ENCODE measurements at regions of chr1 and their contacts with region 1.

Region 1: GRCh38 chr1:39091845-39092645 is 65.9 kb downstream of the NDUFS5 start:
- DNase-seq: peak; percentile 81
- ATAC-seq: peak; percentile 92
- H3K4me3 ChIP-seq: no peak overlapping the region
- H3K27ac ChIP-seq: no peak overlapping the region
- H3K4me1 ChIP-seq: peaks cover 4% of the 10 kb centered on the region
- H3K27me3 ChIP-seq: no peaks in the 10 kb centered on the region
- CTCF ChIP-seq: peak; percentile 80
- POLR2A ChIP-seq: no peak
- RAD21 ChIP-seq: peak; percentile 76

Region 2: DNA sequence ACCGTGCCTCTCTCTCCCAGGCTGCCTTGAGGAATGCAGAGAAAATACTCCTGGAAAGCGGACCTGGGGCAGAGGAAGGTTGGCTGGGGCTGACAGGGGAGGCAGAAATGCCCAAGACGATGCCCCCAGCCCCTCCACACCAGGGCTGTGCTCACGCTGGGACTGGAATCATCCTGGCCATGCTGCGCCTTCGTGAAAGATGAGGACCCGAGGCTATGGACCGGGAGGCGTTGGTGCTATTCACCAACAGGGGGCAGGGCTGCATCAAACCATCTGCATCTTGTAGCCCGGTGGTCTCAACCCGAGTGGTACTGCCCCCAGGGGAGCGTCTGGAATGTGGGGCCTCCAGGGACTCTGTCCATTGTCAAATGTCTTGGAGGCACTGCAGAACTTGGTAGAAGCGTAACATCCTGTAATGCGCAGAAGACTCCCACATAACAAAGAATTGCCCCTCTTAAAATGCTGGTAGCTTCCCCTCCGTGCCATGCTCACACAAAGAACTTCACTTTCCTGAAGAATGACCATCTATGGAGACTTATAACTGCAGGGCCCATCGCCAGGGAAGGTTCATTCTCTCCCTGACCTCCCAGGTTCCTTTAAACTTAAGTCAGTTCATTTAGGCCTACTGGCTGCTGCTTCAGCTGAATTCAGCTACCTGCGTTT is 483.7 kb before region 1 on chr1:
- CTCF ChIA-PET with region 1: no interaction called
- POLR2A ChIA-PET with region 1: no interaction called
- dilution Hi-C with region 1: no loop called
- in situ Hi-C with region 1: no loop called
- intact Hi-C with region 1: loop called (anchors 5 kb)
- DNase-seq: peak; percentile 4
- ATAC-seq: peak; percentile 57; the same call in 1 of the 2 replicates
- H3K4me3 ChIP-seq: no peak overlapping the region
- H3K27ac ChIP-seq: no peak overlapping the region
- H3K4me1 ChIP-seq: no peaks in the 10 kb centered on the region
- H3K27me3 ChIP-seq: no peaks in the 10 kb centered on the region; the same call in 1 of the 2 replicates
- CTCF ChIP-seq: peak; percentile 39
- POLR2A ChIP-seq: no peak
- RAD21 ChIP-seq: peak; percentile 44

Region 3: GRCh38 chr1:39026051-39026865 is 65.8 kb before region 1 on chr1 and contains the start of gene NDUFS5:
- CTCF ChIA-PET with region 1: no interaction called
- POLR2A ChIA-PET with region 1: no interaction called
- dilution Hi-C with region 1: no loop called
- in situ Hi-C with region 1: no loop called
- intact Hi-C with region 1: loop called (anchors 5 kb)
- DNase-seq: peak; percentile 95
- ATAC-seq: peak; percentile 93
- H3K4me3 ChIP-seq: peak within 1 kb of the TSS; percentile 75
- H3K27ac ChIP-seq: peak within 1 kb of the TSS; percentile 93
- H3K4me1 ChIP-seq: peaks cover 3% of the 10 kb centered on the region
- H3K27me3 ChIP-seq: no peaks in the 10 kb centered on the region
- CTCF ChIP-seq: no peak
- POLR2A ChIP-seq: peak; percentile 98
- RAD21 ChIP-seq: 0 out of 2 replicates have a peak, but pooled peaks have one; percentile 16
- total RNA-seq, gene NDUFS5: 645 and 1,415 TPM in 2 replicates

Region 4: DNA sequence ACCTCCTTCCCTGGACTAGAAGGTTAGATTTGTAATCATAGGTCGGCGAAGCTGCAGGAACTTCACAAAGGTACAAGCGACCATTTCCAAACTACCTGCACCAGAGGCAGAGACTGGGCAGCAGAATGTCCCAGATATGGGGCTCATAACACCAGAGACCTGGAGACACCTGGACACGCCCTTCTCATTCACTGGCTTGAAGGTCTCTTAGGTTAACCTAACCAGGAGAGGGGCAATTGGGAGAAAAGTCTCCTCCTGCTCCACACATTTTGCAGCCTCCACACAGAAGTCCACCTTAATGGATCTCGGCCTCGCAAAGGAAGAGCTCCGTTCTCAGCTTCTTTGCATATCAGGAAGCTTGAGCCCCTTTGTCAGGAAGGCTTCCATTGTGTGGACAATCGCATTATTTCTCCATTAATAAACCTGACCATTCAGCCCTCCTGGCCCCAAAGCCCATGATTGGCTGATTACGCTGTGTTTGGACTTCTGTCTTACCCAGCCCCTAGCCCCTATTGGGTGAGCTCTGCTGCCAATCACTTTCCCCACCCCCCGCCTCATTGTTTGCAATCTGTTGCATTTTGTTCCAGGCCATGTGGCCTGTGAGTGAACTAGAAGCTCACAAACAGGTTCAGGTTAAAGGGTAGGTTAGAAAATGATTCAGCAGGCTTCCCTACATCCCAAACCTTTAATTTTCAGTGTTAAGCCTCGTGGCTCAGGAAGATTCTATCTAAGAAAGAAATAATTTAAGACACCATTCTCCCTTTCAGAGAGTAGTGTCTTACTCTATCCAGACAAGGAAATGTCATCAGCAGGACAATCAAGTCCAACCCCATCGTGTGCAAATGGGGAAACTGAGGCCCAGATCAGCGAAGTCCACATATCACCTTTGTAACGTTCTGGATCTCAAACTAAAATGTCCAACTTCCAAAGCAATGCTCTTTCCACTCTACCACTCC is 806.9 kb after region 1 on chr1:
- CTCF ChIA-PET with region 1: no interaction called
- POLR2A ChIA-PET with region 1: no interaction called
- dilution Hi-C with region 1: no loop called
- in situ Hi-C with region 1: no loop called
- intact Hi-C with region 1: no loop called
- DNase-seq: peak; percentile 64
- ATAC-seq: no peak
- H3K4me3 ChIP-seq: no peak overlapping the region
- H3K27ac ChIP-seq: no peak overlapping the region
- H3K4me1 ChIP-seq: peaks cover 12% of the 10 kb centered on the region; the same call in 1 of the 2 replicates
- H3K27me3 ChIP-seq: peaks cover 18% of the 10 kb centered on the region
- CTCF ChIP-seq: no peak
- POLR2A ChIP-seq: no peak
- RAD21 ChIP-seq: no peak